Testis (tissue), 5 donors: ENCODE measurements at regions of chr10 and their contacts with region 1.

Region 1: GRCh38 chr10:32790483-32790882 is 167.5 kb downstream of the ITGB1 start:
- DNase-seq: no peak
- H3K4me3 ChIP-seq: no peak overlapping the region
- H3K27ac ChIP-seq: no peak overlapping the region
- H3K4me1 ChIP-seq: no peaks in the 10 kb centered on the region
- H3K27me3 ChIP-seq: no peaks in the 10 kb centered on the region
- CTCF ChIP-seq: no peak
- POLR2A ChIP-seq: no peak

Region 2: GRCh38 chr10:32650246-32650655 is 140.2 kb before region 1 on chr10:
- intact Hi-C with region 1: no loop called
- DNase-seq: no peak
- H3K4me3 ChIP-seq: no peak overlapping the region
- H3K27ac ChIP-seq: no peak overlapping the region
- H3K4me1 ChIP-seq: no peaks in the 10 kb centered on the region
- H3K27me3 ChIP-seq: no peaks in the 10 kb centered on the region
- CTCF ChIP-seq: no peak
- POLR2A ChIP-seq: no peak

Region 3: GRCh38 chr10:33008499-33009243 is 218.2 kb after region 1 on chr10:
- intact Hi-C with region 1: loop called (anchors 5 kb)
- DNase-seq: peak; percentile 84
- H3K4me3 ChIP-seq: no peak overlapping the region
- H3K27ac ChIP-seq: no peak overlapping the region
- H3K4me1 ChIP-seq: peaks cover 6% of the 10 kb centered on the region
- H3K27me3 ChIP-seq: no peaks in the 10 kb centered on the region
- CTCF ChIP-seq: peak; percentile 91 to 98 (median 98)
- POLR2A ChIP-seq: no peak